ENCODE measurements at regions of chr18 and their contacts with region 1.

Region 1: DNA sequence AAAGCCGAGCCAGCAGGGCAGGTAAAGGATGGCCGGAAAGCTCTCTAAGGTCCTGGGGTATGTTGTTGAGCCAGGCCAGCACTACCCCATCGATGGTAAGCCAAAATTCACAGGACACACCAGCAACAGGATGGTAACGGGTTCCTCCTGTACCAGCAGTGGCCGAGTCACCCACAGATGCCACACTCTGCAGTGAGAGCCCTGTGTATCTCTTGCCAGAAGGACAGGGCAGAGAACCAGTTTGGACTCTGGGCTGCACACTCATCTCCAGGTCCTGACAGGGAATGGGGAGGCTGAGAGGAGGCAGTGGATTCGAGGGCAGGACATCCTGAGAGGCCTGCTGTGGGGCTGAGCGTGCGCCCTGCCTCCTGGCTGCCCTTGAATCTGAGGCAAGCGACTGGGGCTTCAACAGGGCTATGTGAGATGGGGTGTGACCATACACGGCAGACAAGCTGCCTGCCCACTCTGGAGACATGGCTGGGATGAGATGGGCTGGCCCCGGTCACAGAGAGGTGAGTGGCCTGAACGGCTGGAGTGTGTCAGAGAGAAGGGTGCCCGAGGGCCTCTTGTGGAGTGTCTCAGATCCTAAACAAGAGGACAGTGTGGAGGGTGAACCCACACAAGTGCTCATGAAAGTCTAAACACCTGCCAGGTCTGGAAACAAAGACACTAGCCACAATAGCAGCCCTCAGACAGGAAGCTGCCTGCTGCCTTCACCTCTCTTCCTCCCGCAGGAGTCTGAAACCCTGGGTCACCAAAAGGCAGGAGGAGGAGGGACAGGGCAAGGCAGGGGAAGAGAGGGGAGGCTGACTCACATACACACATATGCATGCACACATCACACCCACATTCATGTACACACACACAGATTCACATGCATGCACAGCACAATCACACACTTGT is 182.3 kb downstream of the LOXHD1 start:
- DNase-seq: peak; percentile 37 to 51
- H3K4me3 ChIP-seq: no peak overlapping the region
- H3K27ac ChIP-seq: no peak overlapping the region
- H3K4me1 ChIP-seq: no peaks in the 10 kb centered on the region
- H3K27me3 ChIP-seq: no peaks in the 10 kb centered on the region
- CTCF ChIP-seq: no peak
- POLR2A ChIP-seq: no peak

Region 2: DNA sequence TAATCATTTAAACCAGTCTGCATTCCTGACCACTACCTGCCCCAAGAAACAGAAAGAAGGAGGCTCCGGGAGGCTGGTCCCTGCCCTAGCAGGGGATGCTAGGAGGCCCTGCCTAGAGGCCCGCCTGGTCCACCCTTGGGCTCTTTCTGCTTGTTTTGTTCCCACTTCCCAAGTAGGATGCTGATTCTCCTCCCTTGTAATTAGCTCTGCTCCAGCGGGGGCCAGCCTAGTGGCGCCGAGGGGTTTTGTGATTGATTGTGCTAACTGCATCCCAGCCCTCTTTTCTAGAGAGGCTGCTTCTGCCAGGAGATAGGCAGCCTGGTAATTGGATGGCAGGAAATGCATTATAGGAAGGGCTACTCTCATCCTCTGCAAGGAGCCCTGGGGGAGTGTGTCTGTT is 37.7 kb before region 1 on chr18:
- intact Hi-C with region 1: loop called (anchors 5 kb)
- DNase-seq: no peak
- H3K4me3 ChIP-seq: no peak overlapping the region
- H3K27ac ChIP-seq: no peak overlapping the region
- H3K4me1 ChIP-seq: no peaks in the 10 kb centered on the region
- H3K27me3 ChIP-seq: no peaks in the 10 kb centered on the region
- CTCF ChIP-seq: no peak
- POLR2A ChIP-seq: no peak